Calu3 (cell line): ENCODE measurements at regions of chr17 and their contacts with region 1.

Region 1: GRCh38 chr17:37585066-37585465 is 24.2 kb downstream of the SYNRG start:
- DNase-seq: no peak
- H3K4me3 Mint-ChIP-seq: no peak overlapping the region
- H3K27ac Mint-ChIP-seq: no peak overlapping the region
- H3K4me1 Mint-ChIP-seq: no peaks in the 10 kb centered on the region
- H3K27me3 Mint-ChIP-seq: no peaks in the 10 kb centered on the region
- CTCF ChIP-seq: no peak

Region 2: GRCh38 chr17:37450112-37450511 is 135.0 kb before region 1 on chr17:
- CTCF ChIA-PET with region 1: no interaction called
- intact Hi-C with region 1: no loop called
- DNase-seq: no peak
- H3K4me3 Mint-ChIP-seq: no peak overlapping the region
- H3K27ac Mint-ChIP-seq: no peak overlapping the region
- H3K4me1 Mint-ChIP-seq: peaks cover 24% of the 10 kb centered on the region
- H3K27me3 Mint-ChIP-seq: no peaks in the 10 kb centered on the region
- CTCF ChIP-seq: no peak

Region 3: DNA sequence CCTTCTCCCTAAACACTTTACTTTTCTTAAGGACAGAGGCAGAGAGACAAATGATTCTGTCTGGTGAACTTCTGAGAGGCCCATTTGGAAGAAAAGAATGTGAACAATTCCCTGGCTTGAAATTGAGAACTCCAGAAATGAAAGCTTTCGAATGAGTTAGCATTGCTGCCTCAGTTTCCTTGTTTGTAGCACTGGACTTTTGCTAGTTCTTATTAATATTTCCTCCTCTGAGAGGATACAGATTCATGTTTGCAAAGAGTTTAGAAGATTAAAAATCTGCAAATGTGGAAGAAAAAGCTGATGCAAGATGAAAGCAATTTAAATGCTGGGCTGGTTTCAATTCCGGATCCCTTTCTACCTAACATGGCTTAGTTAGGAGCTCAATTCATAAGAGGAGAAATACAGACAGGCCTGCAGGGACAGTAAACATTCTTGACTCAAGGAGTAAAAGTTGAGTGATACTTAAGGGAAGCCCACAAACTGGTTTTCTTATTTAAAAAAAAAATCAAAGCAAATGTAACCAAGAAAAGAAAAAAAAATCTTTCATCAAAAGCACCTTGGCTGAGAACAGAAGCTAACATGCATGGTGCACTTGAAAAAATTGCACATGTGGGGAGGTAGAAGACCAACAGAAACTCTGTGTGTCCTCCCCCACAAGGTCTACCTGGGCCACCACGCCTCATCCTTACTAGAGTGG is 132.7 kb after region 1 on chr17:
- CTCF ChIA-PET with region 1: no interaction called
- intact Hi-C with region 1: no loop called
- DNase-seq: no peak
- H3K4me3 Mint-ChIP-seq: peak overlapping the region; percentile 17
- H3K27ac Mint-ChIP-seq: peak overlapping the region; percentile 85
- H3K4me1 Mint-ChIP-seq: peaks cover 86% of the 10 kb centered on the region
- H3K27me3 Mint-ChIP-seq: no peaks in the 10 kb centered on the region
- CTCF ChIP-seq: no peak

Region 4: GRCh38 chr17:39485555-39485954 is 1900.5 kb after region 1 on chr17:
- CTCF ChIA-PET with region 1: interaction called, 11 read pairs
- intact Hi-C with region 1: no loop called
- DNase-seq: peak; percentile 61
- H3K4me3 Mint-ChIP-seq: no peak overlapping the region
- H3K27ac Mint-ChIP-seq: peak overlapping the region; percentile 21
- H3K4me1 Mint-ChIP-seq: no peaks in the 10 kb centered on the region
- H3K27me3 Mint-ChIP-seq: no peaks in the 10 kb centered on the region
- CTCF ChIP-seq: no peak